Tibial artery (tissue), 4 donors: ENCODE measurements at regions of chr4 and their contacts with region 1.

Region 1: GRCh38 chr4:153759407-153760316 is at the start of gene RNF175:
- DNase-seq: no peak
- H3K4me3 ChIP-seq: peak within 1 kb of the TSS; percentile 51 to 61
- H3K27ac ChIP-seq: no peak within 1 kb of the TSS
- H3K4me1 ChIP-seq: peaks cover 0 to 13% (median 6%) of the 10 kb centered on the region in 4 donors
- H3K27me3 ChIP-seq: peaks cover 0 to 13% of the 10 kb centered on the region in 2 donors
- CTCF ChIP-seq: no peak

Region 2: DNA sequence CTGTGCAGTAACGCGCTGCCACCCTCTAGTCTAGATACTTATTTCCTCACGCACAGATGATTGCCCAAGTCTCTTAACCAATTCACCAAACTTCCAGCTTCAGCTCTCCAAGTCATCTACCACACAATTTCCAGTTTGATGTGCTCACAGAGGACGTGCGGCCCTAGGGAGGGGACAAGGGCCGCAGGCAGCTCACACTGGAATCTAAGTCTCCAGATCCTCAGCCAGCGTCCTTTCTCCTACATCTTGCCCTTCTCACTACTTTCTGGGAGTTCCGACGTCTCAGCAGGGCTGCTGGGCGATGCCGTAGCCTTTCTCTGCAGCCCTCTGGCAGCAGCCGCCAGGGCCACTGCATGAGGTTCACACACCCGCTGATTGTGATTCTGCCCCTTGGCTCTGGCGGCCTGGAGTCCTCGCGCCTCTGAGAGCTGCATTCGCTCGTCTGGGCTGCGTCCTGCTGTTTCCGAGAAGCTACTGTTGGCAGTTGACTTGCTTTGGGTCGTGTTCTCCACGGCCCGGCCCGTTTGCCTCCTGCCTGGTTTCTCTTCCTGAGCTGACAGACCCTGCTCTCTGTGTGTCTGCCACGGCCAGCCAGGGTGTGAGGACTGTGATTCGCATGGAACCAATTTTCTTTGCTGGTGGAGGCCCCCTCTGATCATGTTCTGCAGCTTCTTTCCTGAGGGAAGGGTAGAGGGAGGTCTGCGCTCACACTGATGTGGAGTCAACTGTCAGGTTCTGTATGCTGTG is 307.6 kb before region 1 on chr4:
- intact Hi-C with region 1: loop called (anchors 5 kb)
- DNase-seq: no peak
- H3K4me3 ChIP-seq: no peak overlapping the region
- H3K27ac ChIP-seq: peak overlapping the region; percentile 16 to 42
- H3K4me1 ChIP-seq: peaks cover 0 to 45% (median 12%) of the 10 kb centered on the region in 4 donors
- H3K27me3 ChIP-seq: no peaks in the 10 kb centered on the region
- CTCF ChIP-seq: no peak

Region 3: DNA sequence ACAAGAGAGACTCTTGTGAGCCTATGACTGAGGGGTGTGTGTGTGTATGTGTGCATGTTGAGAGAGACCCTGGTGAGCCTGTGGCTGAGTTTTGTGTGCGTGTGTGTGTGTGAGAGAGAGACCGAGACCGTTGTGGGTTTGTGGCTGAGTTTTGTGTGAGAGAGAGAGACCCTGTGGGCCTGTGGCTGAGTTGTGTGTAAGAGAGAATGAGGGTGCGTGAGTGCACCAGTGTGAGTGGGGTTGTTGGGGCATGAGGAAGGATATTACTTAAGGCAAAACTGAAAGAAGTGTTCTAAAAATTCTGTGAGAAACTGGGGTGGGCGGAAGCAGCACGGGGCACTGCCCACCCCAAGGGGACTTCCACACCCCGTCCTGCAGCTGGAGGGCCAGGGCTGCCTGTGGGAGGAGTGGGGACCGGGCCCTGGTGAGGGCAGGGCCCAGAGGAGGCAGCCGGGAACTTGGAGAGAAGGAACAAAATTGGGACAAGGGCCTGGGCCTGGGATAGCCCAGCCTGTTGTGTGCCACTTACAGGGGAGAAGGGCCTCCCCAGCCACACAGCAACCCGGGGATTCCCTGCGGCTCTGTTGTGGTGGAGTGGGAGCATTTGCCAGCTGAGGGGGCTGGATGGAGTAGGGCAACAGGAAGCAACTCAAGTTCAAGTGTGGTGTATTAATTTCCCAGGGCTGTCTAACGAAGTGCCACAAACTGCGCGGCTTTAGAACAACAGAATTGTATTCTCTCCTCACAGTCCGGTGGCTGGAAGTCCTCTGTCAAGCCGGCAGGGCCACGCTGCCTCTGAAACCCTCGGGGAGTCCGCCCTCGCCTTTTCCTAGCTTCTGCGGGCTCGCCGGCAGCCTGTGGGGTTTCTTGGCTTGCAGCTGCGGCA is 271.4 kb before region 1 on chr4:
- intact Hi-C with region 1: no loop called
- DNase-seq: peak; percentile 50 to 80
- H3K4me3 ChIP-seq: peak overlapping the region; percentile 30 to 42
- H3K27ac ChIP-seq: peak overlapping the region; percentile 87 to 88
- H3K4me1 ChIP-seq: peaks cover 0 to 88% (median 55%) of the 10 kb centered on the region in 4 donors
- H3K27me3 ChIP-seq: no peaks in the 10 kb centered on the region
- CTCF ChIP-seq: no peak

Region 4: DNA sequence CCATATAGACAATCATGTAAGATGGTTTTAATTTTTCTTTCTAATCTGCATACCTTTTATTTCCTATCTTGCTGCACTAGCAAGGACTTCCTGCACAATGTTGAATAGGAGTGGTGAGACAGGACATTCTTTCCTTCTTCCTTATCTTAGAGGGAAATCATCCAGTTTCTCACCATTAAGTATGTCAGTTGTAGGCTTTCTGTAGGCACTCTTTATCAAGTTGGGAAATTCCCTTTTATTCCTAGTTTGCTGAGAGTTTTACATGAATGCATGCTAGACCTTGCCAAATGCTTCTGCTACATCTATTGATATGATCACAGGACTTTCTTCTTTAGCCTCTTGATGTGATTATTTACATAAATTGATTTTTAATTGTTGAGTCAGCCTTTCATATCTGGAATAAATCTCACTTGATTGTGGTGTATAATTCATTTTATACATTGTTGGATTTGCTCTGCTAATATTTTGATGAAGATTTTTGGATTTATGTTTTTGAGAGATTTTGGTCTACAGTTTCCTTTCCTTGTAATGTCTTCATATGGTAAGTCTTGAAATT is 23.7 kb before region 1 on chr4:
- intact Hi-C with region 1: loop called (anchors 2 kb)
- DNase-seq: no peak
- H3K4me3 ChIP-seq: no peak overlapping the region
- H3K27ac ChIP-seq: no peak overlapping the region
- H3K4me1 ChIP-seq: no peaks in the 10 kb centered on the region
- H3K27me3 ChIP-seq: no peaks in the 10 kb centered on the region
- CTCF ChIP-seq: no peak

Region 5: GRCh38 chr4:153781717-153782416 is 22.2 kb after region 1 on chr4:
- intact Hi-C with region 1: no loop called
- DNase-seq: no peak
- H3K4me3 ChIP-seq: no peak overlapping the region
- H3K27ac ChIP-seq: no peak overlapping the region
- H3K4me1 ChIP-seq: no peaks in the 10 kb centered on the region
- H3K27me3 ChIP-seq: peaks cover 0 to 15% of the 10 kb centered on the region in 2 donors
- CTCF ChIP-seq: no peak